Sigmoid colon (tissue), 7 donors: ENCODE measurements at regions of chr13 and their contacts with region 1.

Region 1: DNA sequence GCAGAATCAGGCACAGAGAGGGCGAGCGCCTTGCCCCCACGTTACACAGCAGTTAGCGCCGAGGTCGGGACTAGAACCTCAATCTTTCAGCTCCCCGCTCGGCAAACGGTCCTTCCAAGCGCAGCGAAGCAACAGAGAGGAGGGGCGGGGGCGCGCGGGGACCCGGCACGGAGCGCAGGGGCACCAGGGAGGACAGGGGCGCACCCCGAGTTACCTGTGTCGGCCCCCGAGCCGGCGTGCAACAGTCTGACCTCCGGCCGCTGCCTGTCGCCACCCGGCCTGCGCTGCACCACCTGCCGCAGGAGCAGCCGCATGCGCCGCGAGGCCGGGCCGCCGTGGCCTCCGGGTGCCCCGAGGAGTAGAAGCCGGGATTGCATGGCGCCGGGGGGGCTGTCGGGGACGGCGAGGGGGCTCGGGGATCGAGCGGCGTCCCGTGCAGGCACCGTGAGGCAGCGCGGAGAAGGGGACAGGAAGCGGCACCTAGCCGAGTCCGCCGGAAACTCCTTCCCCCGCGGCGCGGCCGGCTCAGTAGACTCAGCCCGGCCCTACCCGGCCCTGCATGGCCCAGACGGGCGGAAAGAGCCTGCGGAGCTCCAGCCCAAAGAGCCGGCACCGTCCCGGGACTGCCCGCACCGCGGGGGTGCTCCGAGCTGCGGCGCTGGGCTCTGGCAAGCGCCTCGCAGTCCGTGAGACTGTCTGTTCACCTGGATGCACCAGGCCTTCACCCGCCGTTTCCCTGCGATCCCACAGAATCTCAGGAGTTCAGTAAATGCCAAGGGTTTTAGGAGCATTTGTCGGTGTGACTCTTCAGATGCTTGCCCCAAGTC is at the start of gene VWA8:
- DNase-seq: peak; percentile 88
- H3K4me3 ChIP-seq: peak within 1 kb of the TSS; percentile 73 to 87 (median 84)
- H3K27ac ChIP-seq: peak within 1 kb of the TSS; percentile 84 to 88 (median 86)
- H3K4me1 ChIP-seq: peaks cover 0 to 24% (median 13%) of the 10 kb centered on the region in 4 donors
- H3K27me3 ChIP-seq: no peaks in the 10 kb centered on the region
- CTCF ChIP-seq: no peak
- EP300 ChIP-seq: no peak
- POLR2A ChIP-seq: no peak
- total RNA-seq, gene VWA8: 24.7 to 37.5 (median 27.5) TPM

Region 2: DNA sequence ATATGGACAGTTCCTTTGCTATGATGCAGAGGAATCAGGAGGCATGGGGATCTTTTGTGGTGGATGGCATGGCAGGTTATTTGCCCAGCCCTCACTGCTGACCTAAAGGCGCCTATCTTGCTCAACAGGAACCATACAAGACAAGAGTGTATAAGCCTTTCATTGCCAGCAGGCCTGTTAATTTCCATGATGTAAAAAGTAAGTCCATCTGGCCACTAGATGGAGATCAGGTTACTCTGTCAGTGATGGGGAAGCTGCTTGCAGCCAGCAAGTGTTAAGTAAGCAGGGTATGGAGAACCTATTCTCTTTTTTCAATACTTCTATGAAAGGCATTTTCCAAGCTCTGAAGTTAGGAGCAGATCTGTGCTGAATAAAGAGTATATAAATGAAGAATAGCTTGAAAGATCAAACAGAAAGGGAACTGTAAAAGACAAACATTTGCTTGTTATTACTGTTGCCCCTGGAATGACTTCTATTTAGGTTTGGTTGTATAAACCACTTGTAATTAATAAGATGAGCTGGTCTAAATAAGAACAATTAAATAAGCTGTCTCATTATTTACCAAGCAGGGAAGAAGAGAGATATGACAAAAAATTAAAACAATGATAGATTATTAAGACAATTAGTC is 292.6 kb before region 1 on chr13:
- intact Hi-C with region 1: loop called (anchors 2 kb)
- DNase-seq: peak; percentile 83
- H3K4me3 ChIP-seq: no peak overlapping the region
- H3K27ac ChIP-seq: peak overlapping the region in 3 of 4 donors; percentile 4 to 41 (median 24)
- H3K4me1 ChIP-seq: peaks cover 0 to 24% (median 5%) of the 10 kb centered on the region in 4 donors
- H3K27me3 ChIP-seq: no peaks in the 10 kb centered on the region
- CTCF ChIP-seq: peak; percentile 59 to 90 (median 82)
- EP300 ChIP-seq: no peak
- POLR2A ChIP-seq: no peak